Transverse colon (tissue), 4 donors: ENCODE measurements at regions of chrX and their contacts with region 1.

Region 1: DNA sequence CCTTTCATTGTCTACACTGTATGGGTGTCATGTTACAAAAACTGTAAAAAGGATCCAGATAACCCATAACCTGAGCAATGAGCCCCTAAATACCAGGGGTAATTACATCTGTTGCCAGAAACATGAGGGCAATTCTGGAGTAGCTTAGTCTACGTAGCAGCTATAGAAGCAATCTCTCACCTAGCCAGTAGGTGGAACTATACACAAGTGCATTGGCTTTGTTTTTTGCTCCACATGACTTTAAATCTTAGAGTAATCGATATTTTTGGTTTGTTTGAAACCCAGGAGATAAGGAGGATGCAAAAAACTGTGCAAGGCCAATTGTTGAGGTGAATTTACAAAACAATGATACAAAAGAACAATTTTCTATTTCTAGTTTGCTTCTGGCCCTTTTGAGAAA is 57.5 kb downstream of the GPR82 start:
- DNase-seq: no peak
- H3K4me3 ChIP-seq: no peak overlapping the region
- H3K27ac ChIP-seq: no peak overlapping the region
- H3K4me1 ChIP-seq: peaks cover 0 to 10% (median 7%) of the 10 kb centered on the region in 4 donors
- H3K27me3 ChIP-seq: no peaks in the 10 kb centered on the region
- CTCF ChIP-seq: peak; percentile 47 to 70 (median 57)
- EP300 ChIP-seq: no peak
- POLR2A ChIP-seq: no peak

Region 2: GRCh38 chrX:41750716-41751115 is 30.8 kb before region 1 on chrX:
- in situ Hi-C with region 1: no loop called
- intact Hi-C with region 1: no loop called
- DNase-seq: no peak
- H3K4me3 ChIP-seq: no peak overlapping the region
- H3K27ac ChIP-seq: no peak overlapping the region
- H3K4me1 ChIP-seq: no peaks in the 10 kb centered on the region
- H3K27me3 ChIP-seq: no peaks in the 10 kb centered on the region
- CTCF ChIP-seq: no peak
- EP300 ChIP-seq: no peak
- POLR2A ChIP-seq: no peak

Region 3: DNA sequence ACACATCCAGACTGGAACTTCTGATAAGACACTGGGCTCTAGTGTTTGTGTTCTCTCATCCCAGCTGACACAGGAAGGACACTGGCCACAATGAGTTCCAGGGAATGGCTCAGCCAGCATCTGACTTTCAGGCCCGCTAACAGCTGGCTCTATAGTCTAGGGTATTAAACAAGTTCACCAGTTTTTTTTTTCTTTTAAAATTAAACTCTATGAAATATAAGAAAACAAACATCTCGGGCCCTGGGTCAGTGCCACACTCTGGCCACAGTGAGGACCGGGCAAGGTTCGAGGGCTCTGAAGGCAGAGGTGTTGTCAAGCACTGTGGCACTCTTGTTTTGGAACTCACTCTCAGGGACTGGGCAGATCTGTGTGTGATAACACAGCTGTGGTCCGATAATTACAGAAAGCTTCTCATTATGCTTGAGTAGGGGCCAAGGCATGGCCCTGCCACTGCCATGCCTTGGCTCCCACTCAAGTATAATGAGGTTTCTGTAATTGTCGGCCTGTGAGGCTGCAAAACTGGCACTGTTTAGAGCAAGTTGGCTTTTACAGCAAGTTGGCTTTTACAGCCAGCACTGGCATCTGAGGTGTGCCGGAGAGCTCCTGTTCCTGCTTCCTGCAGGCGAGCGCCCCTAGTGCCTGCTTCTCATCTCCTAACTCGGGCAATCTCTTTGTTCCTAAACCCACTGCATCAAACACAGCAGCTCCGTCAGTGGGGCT is 933.6 kb after region 1 on chrX:
- in situ Hi-C with region 1: loop called in 1 of 4 experiments (anchors 25 kb)
- intact Hi-C with region 1: no loop called
- DNase-seq: peak; percentile 73
- H3K4me3 ChIP-seq: no peak overlapping the region
- H3K27ac ChIP-seq: peak overlapping the region in 1 of 4 donors; percentile 45
- H3K4me1 ChIP-seq: no peaks in the 10 kb centered on the region
- H3K27me3 ChIP-seq: no peaks in the 10 kb centered on the region
- CTCF ChIP-seq: peak; percentile 36 to 47 (median 40)
- EP300 ChIP-seq: no peak
- POLR2A ChIP-seq: no peak

Region 4: DNA sequence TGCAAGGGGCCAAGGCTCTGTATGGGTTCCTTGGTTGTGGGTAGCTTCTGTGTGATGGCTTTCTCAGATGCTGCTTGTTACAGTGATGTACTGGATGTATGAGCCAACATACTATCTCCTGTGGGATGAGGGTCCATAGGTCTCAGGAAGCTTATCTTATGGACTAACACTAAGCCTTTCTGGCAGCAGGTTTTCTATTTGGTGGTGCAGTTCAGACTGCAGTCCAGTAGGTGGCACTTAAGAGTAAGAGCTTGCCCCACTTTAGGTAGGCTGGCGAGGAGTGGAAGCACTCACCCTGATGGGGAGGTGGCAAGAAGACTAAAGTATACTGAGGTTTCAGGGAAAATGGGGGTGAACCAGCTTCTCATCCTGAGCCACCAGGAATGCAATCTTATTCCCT is 1567.9 kb after region 1 on chrX:
- in situ Hi-C with region 1: loop called in 1 of 4 experiments (anchors 25 kb)
- intact Hi-C with region 1: no loop called
- DNase-seq: peak; percentile 41
- H3K4me3 ChIP-seq: no peak overlapping the region
- H3K27ac ChIP-seq: no peak overlapping the region
- H3K4me1 ChIP-seq: no peaks in the 10 kb centered on the region
- H3K27me3 ChIP-seq: no peaks in the 10 kb centered on the region
- CTCF ChIP-seq: peak; percentile 42 to 61 (median 48)
- EP300 ChIP-seq: no peak
- POLR2A ChIP-seq: no peak